ENCODE measurements at regions of chrX and their contacts with region 1.

Region 1: DNA sequence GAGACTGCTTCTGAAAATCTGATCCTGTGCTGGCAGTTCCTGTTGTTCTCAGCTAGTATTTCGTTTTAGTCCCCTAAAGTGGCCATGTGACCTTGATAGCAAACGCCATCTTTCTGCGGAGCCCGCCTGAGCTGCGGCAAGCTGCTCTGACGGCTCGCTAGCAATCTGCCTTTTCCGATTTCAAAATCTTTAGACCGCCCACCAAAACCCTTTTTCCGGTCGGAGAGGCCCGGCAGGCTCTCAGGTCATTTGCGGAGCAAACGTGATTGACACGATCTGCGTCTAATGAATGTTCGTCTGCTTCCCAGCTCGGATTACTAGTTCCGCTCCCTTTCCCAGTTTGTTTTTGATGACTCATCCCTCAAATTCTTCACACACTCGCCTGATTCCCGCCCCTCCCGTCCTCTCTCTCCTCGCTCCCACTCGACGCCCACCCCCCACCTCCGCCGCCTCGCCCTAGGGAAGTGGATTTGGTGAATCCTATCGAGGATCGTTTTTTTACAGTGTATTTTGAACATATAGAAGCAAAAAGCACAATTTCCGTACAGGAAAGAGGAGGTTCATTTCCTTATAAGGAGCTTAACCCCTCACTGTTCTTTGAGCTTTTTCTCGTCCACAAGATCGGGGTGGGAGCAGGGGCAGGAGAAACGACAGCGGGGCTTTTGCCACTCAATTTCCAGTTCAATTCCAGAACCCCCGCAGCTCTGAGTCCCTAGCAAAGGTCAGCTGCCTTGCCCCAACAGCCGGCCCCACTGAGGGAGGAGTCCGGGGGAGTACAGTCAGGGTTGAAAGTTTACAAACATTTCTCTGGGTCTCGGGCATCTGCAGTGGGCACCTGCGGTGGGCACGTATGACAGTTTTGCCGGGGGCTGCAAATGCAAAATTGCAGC is 37.5 kb downstream of the NLGN3 start:
- DNase-seq: peak; percentile 90
- ATAC-seq: peak; percentile 89
- H3K4me3 ChIP-seq: peak overlapping the region; percentile 60 to 77 (median 66)
- H3K4me3 Mint-ChIP-seq: peak overlapping the region; percentile 98
- H3K27ac ChIP-seq: peak overlapping the region; percentile 87 to 92
- H3K27ac Mint-ChIP-seq: peak overlapping the region; percentile 99
- H3K4me1 ChIP-seq: peaks cover 5 to 15% of the 10 kb centered on the region in 2 donors
- H3K4me1 Mint-ChIP-seq: peaks cover 15% of the 10 kb centered on the region
- H3K27me3 ChIP-seq: no peaks in the 10 kb centered on the region
- H3K27me3 Mint-ChIP-seq: no peaks in the 10 kb centered on the region
- CTCF ChIP-seq: no peak

Region 2: DNA sequence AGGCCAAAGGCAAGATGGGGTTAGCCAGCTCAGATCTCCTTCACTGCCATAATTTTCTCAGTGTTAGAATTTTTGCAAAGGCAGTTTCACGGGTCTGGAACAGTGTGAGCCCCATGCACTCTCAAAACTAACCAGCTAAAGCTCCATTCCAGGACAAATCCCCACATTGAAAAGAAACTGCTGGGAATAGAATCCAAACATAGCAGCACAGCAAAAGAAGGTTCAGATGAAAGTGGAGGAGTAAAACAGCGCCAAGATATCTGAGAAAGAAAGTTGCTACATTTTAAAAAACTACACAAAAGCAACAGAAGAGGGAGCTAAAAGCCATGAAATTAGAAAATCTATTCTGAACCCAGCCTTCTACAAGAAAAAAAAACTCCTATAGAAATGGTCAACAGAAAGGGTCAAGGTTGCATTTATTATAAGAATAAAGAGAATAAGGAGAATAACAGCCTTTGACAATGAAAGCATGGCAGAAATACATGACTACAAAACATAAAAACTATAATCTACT is 211.6 kb before region 1 on chrX:
- CTCF ChIA-PET with region 1: interaction called, 6 read pairs
- POLR2A ChIA-PET with region 1: interaction called, 4 read pairs
- intact Hi-C with region 1: loop called (anchors 1 kb)
- DNase-seq: peak; percentile 12
- ATAC-seq: no peak
- H3K4me3 ChIP-seq: peak overlapping the region in 1 of 5 experiments; percentile 9
- H3K4me3 Mint-ChIP-seq: no peak overlapping the region
- H3K27ac ChIP-seq: no peak overlapping the region
- H3K27ac Mint-ChIP-seq: no peak overlapping the region
- H3K4me1 ChIP-seq: peaks cover 0 to 3% of the 10 kb centered on the region in 2 donors
- H3K4me1 Mint-ChIP-seq: peaks cover 3% of the 10 kb centered on the region
- H3K27me3 ChIP-seq: no peaks in the 10 kb centered on the region
- H3K27me3 Mint-ChIP-seq: no peaks in the 10 kb centered on the region
- CTCF ChIP-seq: peak; percentile 35

Region 3: GRCh38 chrX:71095543-71095911 is 86.6 kb before region 1 on chrX and contains the start of gene FOXO4:
- CTCF ChIA-PET with region 1: interaction called, 7 read pairs
- POLR2A ChIA-PET with region 1: interaction called, 3 read pairs
- intact Hi-C with region 1: loop called (anchors 1 kb)
- DNase-seq: peak; percentile 87
- ATAC-seq: peak; percentile 85
- H3K4me3 ChIP-seq: peak within 1 kb of the TSS; percentile 49 to 73 (median 61)
- H3K4me3 Mint-ChIP-seq: peak within 1 kb of the TSS; percentile 98
- H3K27ac ChIP-seq: peak within 1 kb of the TSS; percentile 43 to 61
- H3K27ac Mint-ChIP-seq: peak within 1 kb of the TSS; percentile 99
- H3K4me1 ChIP-seq: peaks cover 13 to 28% of the 10 kb centered on the region in 2 donors
- H3K4me1 Mint-ChIP-seq: peaks cover 26% of the 10 kb centered on the region
- H3K27me3 ChIP-seq: no peaks in the 10 kb centered on the region
- H3K27me3 Mint-ChIP-seq: no peaks in the 10 kb centered on the region
- CTCF ChIP-seq: no peak
- total RNA-seq, gene FOXO4: 41.4 and 48.7 TPM in 2 replicates

Region 4: DNA sequence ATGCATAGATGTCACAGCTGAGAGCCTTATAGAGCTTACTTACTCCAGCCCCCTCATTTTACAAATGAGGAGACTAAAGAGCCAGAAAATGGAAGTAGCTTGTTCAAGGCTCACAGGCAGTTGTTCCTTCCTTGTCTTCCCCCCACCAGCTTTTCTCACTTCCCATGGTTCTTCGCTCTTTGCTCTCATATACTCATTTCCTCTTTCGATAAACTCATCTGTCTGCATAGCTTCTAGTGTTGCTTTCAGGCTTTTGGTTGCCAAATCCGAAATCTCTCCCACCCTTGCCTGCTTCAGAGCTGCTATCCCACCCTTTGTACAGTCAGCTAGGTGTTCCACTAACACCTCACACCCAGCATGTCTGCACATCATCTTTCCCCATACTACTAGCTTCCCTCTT is 15.9 kb after region 1 on chrX:
- CTCF ChIA-PET with region 1: interaction called, 39 read pairs
- POLR2A ChIA-PET with region 1: interaction called, 23 read pairs
- intact Hi-C with region 1: loop called (anchors 1 kb)
- DNase-seq: peak; percentile 68
- ATAC-seq: peak; percentile 84
- H3K4me3 ChIP-seq: peak overlapping the region; percentile 19 to 68 (median 59)
- H3K4me3 Mint-ChIP-seq: peak overlapping the region; percentile 97
- H3K27ac ChIP-seq: peak overlapping the region; percentile 25 to 53
- H3K27ac Mint-ChIP-seq: peak overlapping the region; percentile 92
- H3K4me1 ChIP-seq: peaks cover 15 to 21% of the 10 kb centered on the region in 2 donors
- H3K4me1 Mint-ChIP-seq: peaks cover 28% of the 10 kb centered on the region
- H3K27me3 ChIP-seq: no peaks in the 10 kb centered on the region
- H3K27me3 Mint-ChIP-seq: no peaks in the 10 kb centered on the region
- CTCF ChIP-seq: no peak

Region 5: GRCh38 chrX:71283403-71284143 is 101.4 kb after region 1 on chrX and contains the start of gene NONO:
- CTCF ChIA-PET with region 1: interaction called, 5 read pairs
- POLR2A ChIA-PET with region 1: interaction called, 15 read pairs
- intact Hi-C with region 1: loop called (anchors 1 kb)
- DNase-seq: peak; percentile 96
- ATAC-seq: peak; percentile 91
- H3K4me3 ChIP-seq: peak within 1 kb of the TSS; percentile 55 to 83 (median 68)
- H3K4me3 Mint-ChIP-seq: peak within 1 kb of the TSS; percentile 95
- H3K27ac ChIP-seq: peak within 1 kb of the TSS; percentile 94 to 95
- H3K27ac Mint-ChIP-seq: peak within 1 kb of the TSS; percentile 98
- H3K4me1 ChIP-seq: peaks cover 16 to 21% of the 10 kb centered on the region in 2 donors
- H3K4me1 Mint-ChIP-seq: peaks cover 23% of the 10 kb centered on the region
- H3K27me3 ChIP-seq: no peaks in the 10 kb centered on the region
- H3K27me3 Mint-ChIP-seq: no peaks in the 10 kb centered on the region
- CTCF ChIP-seq: no peak
- total RNA-seq, gene NONO: 286 TPM in 2 replicates

Region 6: GRCh38 chrX:71872542-71873458 is 690.6 kb after region 1 on chrX:
- CTCF ChIA-PET with region 1: no interaction called
- POLR2A ChIA-PET with region 1: no interaction called
- intact Hi-C with region 1: no loop called
- DNase-seq: no peak
- ATAC-seq: no peak
- H3K4me3 ChIP-seq: no peak overlapping the region
- H3K4me3 Mint-ChIP-seq: no peak overlapping the region
- H3K27ac ChIP-seq: no peak overlapping the region
- H3K27ac Mint-ChIP-seq: no peak overlapping the region
- H3K4me1 ChIP-seq: no peaks in the 10 kb centered on the region
- H3K4me1 Mint-ChIP-seq: no peaks in the 10 kb centered on the region
- H3K27me3 ChIP-seq: no peaks in the 10 kb centered on the region
- H3K27me3 Mint-ChIP-seq: peaks cover 8% of the 10 kb centered on the region
- CTCF ChIP-seq: no peak